ENCODE measurements at regions of chr12 and their contacts with region 1.

Region 1: GRCh38 chr12:53065975-53066931 is 12.9 kb downstream of the SPRYD3 start:
- DNase-seq: peak; percentile 64 to 86
- ATAC-seq: peak; percentile 69 to 85 (median 77)
- H3K4me3 ChIP-seq: no peak overlapping the region
- H3K4me3 Mint-ChIP-seq: no peak overlapping the region
- H3K27ac ChIP-seq: no peak overlapping the region
- H3K27ac Mint-ChIP-seq: peak overlapping the region in 1 of 2 donors; percentile 15
- H3K4me1 ChIP-seq: no peaks in the 10 kb centered on the region
- H3K4me1 Mint-ChIP-seq: peaks cover 5 to 22% of the 10 kb centered on the region in 2 donors
- H3K27me3 ChIP-seq: no peaks in the 10 kb centered on the region
- H3K27me3 Mint-ChIP-seq: no peaks in the 10 kb centered on the region
- CTCF ChIP-seq: peak; percentile 90

Region 2: GRCh38 chr12:52980693-52981423 is 85.4 kb before region 1 on chr12:
- intact Hi-C with region 1: no loop called
- DNase-seq: peak; percentile 65 to 92
- ATAC-seq: peak; percentile 94 to 99 (median 98)
- H3K4me3 ChIP-seq: no peak overlapping the region
- H3K4me3 Mint-ChIP-seq: no peak overlapping the region
- H3K27ac ChIP-seq: no peak overlapping the region
- H3K27ac Mint-ChIP-seq: no peak overlapping the region
- H3K4me1 ChIP-seq: peaks cover 4% of the 10 kb centered on the region
- H3K4me1 Mint-ChIP-seq: peaks cover 0 to 7% of the 10 kb centered on the region in 2 donors
- H3K27me3 ChIP-seq: peaks cover 5% of the 10 kb centered on the region
- H3K27me3 Mint-ChIP-seq: peaks cover 28 to 33% of the 10 kb centered on the region in 2 donors
- CTCF ChIP-seq: peak; percentile 98

Region 3: DNA sequence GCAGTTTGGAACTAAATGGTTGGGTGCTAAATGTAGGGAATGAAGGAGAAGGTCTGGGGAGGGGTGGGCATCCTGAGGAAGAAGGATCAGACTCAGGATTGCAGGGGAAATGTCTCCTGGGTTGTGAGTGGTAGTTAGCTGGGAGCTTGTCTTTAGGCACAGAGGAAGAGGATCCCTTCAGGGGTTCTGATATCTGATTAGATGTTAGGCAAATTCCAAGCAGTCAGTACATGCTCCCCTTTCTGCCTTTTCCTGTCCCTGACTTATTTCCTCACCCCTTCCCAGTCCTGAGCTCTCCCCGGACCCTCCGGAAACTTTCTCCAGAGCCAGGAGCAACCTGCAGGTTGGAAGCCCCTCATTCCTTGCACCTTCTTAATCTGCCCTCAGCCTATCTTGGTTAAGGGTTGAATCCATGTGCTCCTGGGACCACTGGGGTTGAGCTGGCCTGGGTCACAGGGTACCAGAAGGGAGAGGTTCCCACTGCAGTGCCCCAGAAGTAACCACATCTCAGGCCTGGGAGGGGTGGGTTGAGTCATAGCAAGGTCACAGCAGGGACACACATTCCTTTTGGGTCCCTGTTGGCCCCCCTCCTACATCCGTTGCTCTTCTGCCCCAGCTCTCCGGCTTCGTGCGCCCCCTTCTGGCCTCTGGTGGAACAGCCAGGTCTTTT is 32.9 kb after region 1 on chr12:
- intact Hi-C with region 1: loop called (anchors 1 kb)
- DNase-seq: peak; percentile 83 to 91
- ATAC-seq: peak; percentile 72 to 84 (median 72)
- H3K4me3 ChIP-seq: no peak overlapping the region
- H3K4me3 Mint-ChIP-seq: peak overlapping the region; percentile 62
- H3K27ac ChIP-seq: no peak overlapping the region
- H3K27ac Mint-ChIP-seq: peak overlapping the region in 1 of 2 donors; percentile 49
- H3K4me1 ChIP-seq: peaks cover 52% of the 10 kb centered on the region
- H3K4me1 Mint-ChIP-seq: peaks cover 25 to 43% of the 10 kb centered on the region in 2 donors
- H3K27me3 ChIP-seq: peaks cover 3% of the 10 kb centered on the region
- H3K27me3 Mint-ChIP-seq: peaks cover 0 to 9% of the 10 kb centered on the region in 2 donors
- CTCF ChIP-seq: peak; percentile 96

Region 4: GRCh38 chr12:53344824-53345485 is 278.7 kb after region 1 on chr12:
- intact Hi-C with region 1: loop called (anchors 10 kb)
- DNase-seq: peak; percentile 65 to 85
- ATAC-seq: peak; percentile 88 to 91 (median 91)
- H3K4me3 ChIP-seq: peak overlapping the region; percentile 57
- H3K4me3 Mint-ChIP-seq: peak overlapping the region; percentile 99
- H3K27ac ChIP-seq: peak overlapping the region; percentile 43
- H3K27ac Mint-ChIP-seq: peak overlapping the region; percentile 73 to 84
- H3K4me1 ChIP-seq: peaks cover 14% of the 10 kb centered on the region
- H3K4me1 Mint-ChIP-seq: peaks cover 11 to 19% of the 10 kb centered on the region in 2 donors
- H3K27me3 ChIP-seq: no peaks in the 10 kb centered on the region
- H3K27me3 Mint-ChIP-seq: peaks cover 0 to 4% of the 10 kb centered on the region in 2 donors
- CTCF ChIP-seq: peak; percentile 68

Measured in natural killer cell (primary cell).